ENCODE measurements at regions of chr4 and their contacts with region 1.

Region 1: GRCh38 chr4:143335979-143336780 is 496 bp upstream of the GAB1 start:
- DNase-seq: peak; percentile 91 to 93
- ATAC-seq: peak; percentile 90 to 95 (median 92)
- H3K4me3 ChIP-seq: peak overlapping the region; percentile 65 to 97 (median 90)
- H3K27ac ChIP-seq: peak overlapping the region; percentile 93 to 98 (median 96)
- H3K4me1 ChIP-seq: peaks cover 3 to 44% (median 33%) of the 10 kb centered on the region in 9 donors
- H3K27me3 ChIP-seq: no peaks in the 10 kb centered on the region
- CTCF ChIP-seq: no peak

Region 2: DNA sequence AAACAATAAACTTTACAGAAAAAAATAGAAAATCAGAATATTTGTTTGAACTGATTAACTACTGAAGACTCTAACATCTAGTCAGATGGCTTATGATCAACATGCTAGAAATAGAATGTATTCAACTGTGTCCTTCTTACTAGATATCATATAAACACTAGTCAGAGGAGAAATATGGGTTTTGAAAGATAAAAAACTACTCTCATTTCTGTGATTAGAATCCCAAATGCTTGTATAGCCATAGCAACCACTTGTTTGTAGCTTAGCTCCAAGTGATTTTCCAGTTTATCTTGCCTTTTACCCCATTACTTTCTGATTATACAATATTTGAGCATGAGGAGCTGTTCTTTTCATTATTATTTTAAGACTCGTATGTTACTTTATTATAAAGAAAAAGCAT is 120.3 kb before region 1 on chr4:
- intact Hi-C with region 1: loop called in 4 of 10 experiments (anchors 5 to 10 kb)
- DNase-seq: no peak
- ATAC-seq: peak in 6 of 8 donors; percentile 38 to 62 (median 56)
- H3K4me3 ChIP-seq: no peak overlapping the region
- H3K27ac ChIP-seq: peak overlapping the region in 4 of 10 donors; percentile 7 to 59 (median 12)
- H3K4me1 ChIP-seq: peaks cover 0 to 27% (median 7%) of the 10 kb centered on the region in 9 donors
- H3K27me3 ChIP-seq: no peaks in the 10 kb centered on the region
- CTCF ChIP-seq: no peak

Region 3: DNA sequence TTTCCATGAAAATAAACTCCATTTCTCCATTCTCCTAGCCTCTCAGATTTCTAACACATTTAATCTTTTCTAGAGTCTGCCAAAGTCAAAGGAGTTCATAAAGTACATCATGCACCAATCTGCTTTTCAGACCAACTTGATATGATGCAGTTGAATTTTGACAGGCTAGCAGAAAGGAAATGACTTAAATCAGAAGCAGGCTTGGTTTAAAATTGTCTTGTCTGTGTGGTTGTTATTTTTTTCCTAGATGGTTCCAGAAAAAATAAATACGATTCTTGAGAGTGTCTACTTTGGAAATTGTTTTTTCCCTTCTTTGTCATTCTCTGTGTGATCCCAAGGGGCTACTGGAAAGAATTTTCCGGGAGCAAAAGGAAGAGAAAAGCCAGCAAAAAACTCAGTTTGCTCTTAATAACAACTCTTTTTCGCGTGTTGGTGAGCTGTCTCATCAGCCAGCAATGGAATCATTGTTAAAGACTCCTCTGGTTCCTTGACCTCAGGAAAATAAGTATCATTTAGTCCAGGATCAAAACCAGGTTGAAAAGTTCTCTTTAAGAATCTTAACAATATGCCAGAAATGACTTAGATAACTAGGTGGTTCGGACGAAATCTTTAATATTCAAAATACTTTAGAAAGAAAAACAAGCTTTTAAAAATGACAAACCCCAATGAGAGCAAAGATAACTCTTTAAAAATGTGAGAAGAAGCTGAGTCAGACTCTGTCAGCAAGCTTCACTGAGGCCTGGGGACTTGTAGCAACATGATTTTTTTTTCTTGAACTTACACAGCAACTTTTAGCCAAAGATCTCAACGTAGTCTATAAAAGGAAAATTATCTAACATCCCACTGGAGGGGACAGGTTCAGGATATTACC is 49.2 kb before region 1 on chr4:
- intact Hi-C with region 1: loop called in 3 of 10 experiments (anchors 2 to 10 kb)
- DNase-seq: peak in 1 of 2 donors; percentile 13
- ATAC-seq: peak in 7 of 8 donors; percentile 26 to 79 (median 52)
- H3K4me3 ChIP-seq: peak overlapping the region in 2 of 10 donors; percentile 1
- H3K27ac ChIP-seq: peak overlapping the region; percentile 35 to 84 (median 70)
- H3K4me1 ChIP-seq: peaks cover 0 to 45% (median 27%) of the 10 kb centered on the region in 9 donors
- H3K27me3 ChIP-seq: no peaks in the 10 kb centered on the region
- CTCF ChIP-seq: no peak

Region 4: DNA sequence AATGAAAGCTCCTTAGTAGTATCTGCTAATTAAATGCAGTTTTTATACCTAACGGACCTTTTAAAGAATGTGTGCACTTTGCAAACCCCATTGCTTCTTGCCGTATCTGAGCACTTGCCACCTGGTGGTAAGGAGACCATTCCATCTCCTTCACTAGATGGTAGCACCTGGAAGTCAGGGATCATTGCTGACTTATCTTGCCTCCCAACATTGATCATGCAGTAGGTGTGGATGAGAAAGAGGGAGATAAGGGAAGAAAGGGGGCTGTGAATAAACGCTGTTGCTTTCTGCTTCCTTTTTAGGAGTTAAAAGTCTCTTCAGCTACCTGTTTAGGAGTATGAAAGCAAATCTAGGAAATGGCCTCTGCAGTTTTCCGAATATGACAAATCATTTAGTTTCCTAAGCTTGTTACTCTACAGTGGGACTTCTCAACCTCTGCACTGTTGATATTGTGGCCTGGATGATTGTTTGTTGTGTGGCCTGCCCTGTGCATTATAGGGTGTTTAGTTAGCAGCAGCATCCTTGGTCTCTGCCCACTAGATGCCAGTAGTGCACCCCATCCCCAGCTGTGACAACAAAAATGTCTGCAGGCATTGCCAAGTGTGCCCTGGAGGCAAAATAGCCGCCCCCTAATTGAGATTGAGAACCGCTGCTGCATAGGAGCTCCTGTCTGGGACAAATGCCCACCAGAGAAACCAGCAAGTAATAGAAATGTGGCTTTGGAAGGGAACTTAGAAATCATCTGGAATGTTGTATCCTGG is 39.3 kb after region 1 on chr4:
- intact Hi-C with region 1: loop called in 2 of 10 experiments (anchors 5 kb)
- DNase-seq: no peak
- ATAC-seq: peak; percentile 44 to 83 (median 66)
- H3K4me3 ChIP-seq: no peak overlapping the region
- H3K27ac ChIP-seq: peak overlapping the region in 5 of 10 donors; percentile 3 to 78 (median 58)
- H3K4me1 ChIP-seq: peaks cover 7 to 88% (median 79%) of the 10 kb centered on the region in 9 donors
- H3K27me3 ChIP-seq: no peaks in the 10 kb centered on the region
- CTCF ChIP-seq: peak in 8 of 9 donors; percentile 15 to 53 (median 48)

Region 5: GRCh38 chr4:143399113-143399949 is 63.2 kb after region 1 on chr4:
- intact Hi-C with region 1: loop called in 5 of 10 experiments (anchors 1 to 10 kb)
- DNase-seq: no peak
- ATAC-seq: no peak
- H3K4me3 ChIP-seq: no peak overlapping the region
- H3K27ac ChIP-seq: peak overlapping the region in 3 of 10 donors; percentile 10 to 32 (median 16)
- H3K4me1 ChIP-seq: peaks cover 10 to 95% (median 79%) of the 10 kb centered on the region in 9 donors
- H3K27me3 ChIP-seq: no peaks in the 10 kb centered on the region
- CTCF ChIP-seq: peak; percentile 36 to 79 (median 67)

Region 6: DNA sequence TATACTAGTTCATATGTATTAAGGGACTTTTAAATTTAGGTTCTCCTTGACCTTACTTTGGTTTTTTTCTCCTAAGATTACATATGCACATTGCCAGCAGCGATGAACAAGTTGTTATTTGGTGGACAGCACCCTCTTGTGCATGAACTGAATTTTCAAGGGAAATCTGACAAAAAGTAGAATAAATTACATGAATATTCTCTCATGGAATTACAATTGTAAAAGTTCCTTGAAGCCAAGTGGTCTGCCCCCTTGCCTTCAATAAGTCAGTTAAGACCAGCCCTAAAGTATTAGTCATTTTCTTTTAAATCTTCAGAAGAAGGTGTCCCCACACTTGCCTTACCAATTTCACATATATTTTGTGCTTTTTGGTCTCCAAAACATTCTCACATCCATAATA is 146.7 kb after region 1 on chr4:
- intact Hi-C with region 1: loop called in 2 of 10 experiments (anchors 5 to 10 kb)
- DNase-seq: peak in 1 of 2 donors; percentile 20
- ATAC-seq: peak in 6 of 8 donors; percentile 20 to 64 (median 54)
- H3K4me3 ChIP-seq: no peak overlapping the region
- H3K27ac ChIP-seq: no peak overlapping the region
- H3K4me1 ChIP-seq: peaks cover 0 to 9% (median 0%) of the 10 kb centered on the region in 9 donors
- H3K27me3 ChIP-seq: no peaks in the 10 kb centered on the region
- CTCF ChIP-seq: peak; percentile 36 to 86 (median 64)

Measured in heart right ventricle (tissue), 16 donors.